ENCODE measurements at regions of chr15 and their contacts with region 1.

Region 1: DNA sequence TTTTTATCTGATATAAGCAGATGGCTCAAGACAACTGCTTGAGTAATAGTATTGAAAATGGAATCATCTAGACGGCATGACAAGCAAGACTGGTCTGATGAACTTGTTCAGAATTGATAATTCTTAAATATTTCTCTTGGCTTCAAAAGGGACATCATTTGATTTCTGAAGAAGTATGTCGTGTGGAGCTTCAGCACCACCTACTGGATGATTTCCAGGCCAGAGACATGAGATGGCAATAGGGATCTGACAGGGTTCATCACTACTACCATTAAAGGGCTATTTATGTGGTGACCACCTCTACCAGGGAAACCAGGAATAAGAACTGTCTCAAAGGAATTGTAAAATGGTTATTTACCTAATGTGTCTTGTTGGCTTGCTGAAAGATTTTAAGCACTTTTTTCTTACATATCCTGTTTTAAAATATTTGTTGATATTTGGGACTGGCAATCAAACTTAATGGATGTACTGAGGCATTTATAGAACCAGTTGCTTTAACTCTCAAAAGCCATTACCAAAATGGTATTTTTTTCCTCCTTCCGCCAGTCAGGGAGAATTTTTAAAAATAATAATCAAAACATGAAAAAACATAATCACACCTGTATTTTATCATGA is 99.5 kb upstream of the FAM98B start:
- DNase-seq: peak; percentile 77
- ATAC-seq: peak; percentile 39
- H3K4me3 Mint-ChIP-seq: no peak overlapping the region
- H3K27ac Mint-ChIP-seq: no peak overlapping the region
- H3K4me1 Mint-ChIP-seq: no peaks in the 10 kb centered on the region
- H3K27me3 Mint-ChIP-seq: peaks cover 3% of the 10 kb centered on the region
- CTCF ChIP-seq: peak; percentile 68

Region 2: GRCh38 chr15:37995461-37996347 is 358.7 kb before region 1 on chr15:
- CTCF ChIA-PET with region 1: interaction called, 3 read pairs
- POLR2A ChIA-PET with region 1: no interaction called
- intact Hi-C with region 1: loop called (anchors 5 kb)
- DNase-seq: no peak
- ATAC-seq: no peak
- H3K4me3 Mint-ChIP-seq: no peak overlapping the region
- H3K27ac Mint-ChIP-seq: no peak overlapping the region
- H3K4me1 Mint-ChIP-seq: no peaks in the 10 kb centered on the region
- H3K27me3 Mint-ChIP-seq: peaks cover 13% of the 10 kb centered on the region
- CTCF ChIP-seq: peak; percentile 55

Region 3: GRCh38 chr15:38374556-38374955 is 20.1 kb after region 1 on chr15:
- CTCF ChIA-PET with region 1: no interaction called
- POLR2A ChIA-PET with region 1: no interaction called
- intact Hi-C with region 1: no loop called
- DNase-seq: no peak
- ATAC-seq: no peak
- H3K4me3 Mint-ChIP-seq: no peak overlapping the region
- H3K27ac Mint-ChIP-seq: no peak overlapping the region
- H3K4me1 Mint-ChIP-seq: no peaks in the 10 kb centered on the region
- H3K27me3 Mint-ChIP-seq: peaks cover 13% of the 10 kb centered on the region
- CTCF ChIP-seq: no peak

Region 4: GRCh38 chr15:38406436-38406835 is 52.0 kb after region 1 on chr15:
- CTCF ChIA-PET with region 1: no interaction called
- POLR2A ChIA-PET with region 1: no interaction called
- intact Hi-C with region 1: no loop called
- DNase-seq: no peak
- ATAC-seq: peak; percentile 30
- H3K4me3 Mint-ChIP-seq: no peak overlapping the region
- H3K27ac Mint-ChIP-seq: no peak overlapping the region
- H3K4me1 Mint-ChIP-seq: no peaks in the 10 kb centered on the region
- H3K27me3 Mint-ChIP-seq: peaks cover 10% of the 10 kb centered on the region
- CTCF ChIP-seq: no peak